ENCODE measurements at regions of chr3 and their contacts with region 1.

Region 1: DNA sequence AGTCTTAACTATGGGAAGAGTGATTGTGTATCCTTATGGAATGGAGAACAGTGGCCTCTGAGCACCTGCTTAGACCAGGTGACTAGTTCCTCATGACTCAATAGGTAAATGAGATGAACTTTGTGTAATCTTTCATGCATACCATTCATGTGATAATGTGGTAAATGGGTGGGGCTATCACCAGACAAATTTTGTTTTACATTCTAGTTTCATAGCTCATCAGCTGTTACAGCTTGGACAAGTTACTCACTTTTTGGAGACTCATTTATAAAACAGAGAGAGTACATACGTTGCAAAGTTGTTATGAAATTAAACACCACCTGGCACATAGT is 103.7 kb upstream of the TGFBR2 start:
- DNase-seq: no peak
- H3K4me3 Mint-ChIP-seq: no peak overlapping the region
- H3K27ac Mint-ChIP-seq: peak overlapping the region; percentile 70
- H3K4me1 Mint-ChIP-seq: peaks cover 46% of the 10 kb centered on the region
- H3K27me3 Mint-ChIP-seq: no peaks in the 10 kb centered on the region

Region 2: DNA sequence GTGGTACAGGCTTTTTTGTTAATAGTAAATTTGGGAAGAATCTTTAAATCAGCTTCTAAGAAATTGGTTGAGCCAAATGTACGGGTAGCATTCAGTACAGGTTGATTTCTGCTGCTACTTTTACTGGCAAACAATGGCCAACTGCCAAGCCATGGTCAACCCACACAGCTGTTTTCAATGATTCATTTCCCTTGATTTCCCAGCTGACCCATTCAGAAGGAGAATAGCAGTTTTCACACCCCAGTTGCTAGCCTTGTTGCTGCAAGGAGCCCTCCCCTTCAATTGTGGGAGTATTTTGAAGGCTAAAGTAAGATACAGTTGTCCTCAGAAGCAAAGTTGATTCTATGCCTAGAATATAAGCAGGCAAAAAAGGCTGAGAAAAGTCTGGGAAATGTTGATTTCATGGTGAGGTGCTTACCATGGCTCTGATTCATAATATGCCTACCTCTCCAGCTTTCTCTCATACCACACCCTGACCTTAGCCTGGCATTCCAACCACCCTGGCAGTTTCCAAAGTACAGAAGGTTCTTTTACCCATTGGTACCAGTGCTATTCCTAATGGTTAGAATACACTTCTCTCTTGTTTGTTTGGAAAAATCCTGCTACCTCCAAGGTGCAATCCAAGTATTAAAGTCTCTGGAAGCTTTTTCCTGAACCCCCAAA is 216.6 kb before region 1 on chr3:
- CTCF ChIA-PET with region 1: no interaction called
- POLR2A ChIA-PET with region 1: no interaction called
- intact Hi-C with region 1: loop called (anchors 5 kb)
- DNase-seq: peak; percentile 66
- H3K4me3 Mint-ChIP-seq: no peak overlapping the region
- H3K27ac Mint-ChIP-seq: no peak overlapping the region
- H3K4me1 Mint-ChIP-seq: peaks cover 32% of the 10 kb centered on the region
- H3K27me3 Mint-ChIP-seq: no peaks in the 10 kb centered on the region

Region 3: GRCh38 chr3:30475038-30475808 is 27.5 kb before region 1 on chr3:
- CTCF ChIA-PET with region 1: no interaction called
- POLR2A ChIA-PET with region 1: interaction called, 3 read pairs
- intact Hi-C with region 1: loop called (anchors 2 kb)
- DNase-seq: peak; percentile 14
- H3K4me3 Mint-ChIP-seq: no peak overlapping the region
- H3K27ac Mint-ChIP-seq: no peak overlapping the region
- H3K4me1 Mint-ChIP-seq: peaks cover 29% of the 10 kb centered on the region
- H3K27me3 Mint-ChIP-seq: no peaks in the 10 kb centered on the region

Region 4: DNA sequence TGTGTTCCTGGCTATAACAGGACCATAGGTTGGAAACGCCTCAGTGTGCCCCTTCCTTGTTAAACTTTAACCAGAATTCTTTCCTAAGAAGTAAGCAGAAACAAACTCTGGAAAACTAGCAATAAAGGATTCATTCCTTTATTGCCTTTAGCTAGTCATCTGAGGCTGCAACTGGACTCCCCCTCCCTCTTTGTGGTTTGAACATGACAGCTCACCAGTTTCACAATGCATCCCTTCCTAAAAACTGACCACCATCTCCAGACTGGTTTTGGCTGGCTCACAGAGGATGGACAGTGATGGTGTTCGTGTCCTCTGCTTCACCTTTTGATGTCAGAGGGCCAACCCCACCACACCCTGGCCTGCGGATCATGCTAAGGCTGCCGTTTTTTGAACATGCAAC is 75.8 kb after region 1 on chr3:
- CTCF ChIA-PET with region 1: no interaction called
- POLR2A ChIA-PET with region 1: no interaction called
- intact Hi-C with region 1: no loop called
- DNase-seq: no peak
- H3K4me3 Mint-ChIP-seq: no peak overlapping the region
- H3K27ac Mint-ChIP-seq: no peak overlapping the region
- H3K4me1 Mint-ChIP-seq: peaks cover 9% of the 10 kb centered on the region
- H3K27me3 Mint-ChIP-seq: no peaks in the 10 kb centered on the region

Region 5: GRCh38 chr3:30628901-30629590 is 126.3 kb after region 1 on chr3:
- CTCF ChIA-PET with region 1: no interaction called
- POLR2A ChIA-PET with region 1: no interaction called
- intact Hi-C with region 1: loop called (anchors 1 kb)
- DNase-seq: no peak
- H3K4me3 Mint-ChIP-seq: peak overlapping the region; percentile 45
- H3K27ac Mint-ChIP-seq: peak overlapping the region; percentile 91
- H3K4me1 Mint-ChIP-seq: peaks cover 90% of the 10 kb centered on the region
- H3K27me3 Mint-ChIP-seq: no peaks in the 10 kb centered on the region

Region 6: DNA sequence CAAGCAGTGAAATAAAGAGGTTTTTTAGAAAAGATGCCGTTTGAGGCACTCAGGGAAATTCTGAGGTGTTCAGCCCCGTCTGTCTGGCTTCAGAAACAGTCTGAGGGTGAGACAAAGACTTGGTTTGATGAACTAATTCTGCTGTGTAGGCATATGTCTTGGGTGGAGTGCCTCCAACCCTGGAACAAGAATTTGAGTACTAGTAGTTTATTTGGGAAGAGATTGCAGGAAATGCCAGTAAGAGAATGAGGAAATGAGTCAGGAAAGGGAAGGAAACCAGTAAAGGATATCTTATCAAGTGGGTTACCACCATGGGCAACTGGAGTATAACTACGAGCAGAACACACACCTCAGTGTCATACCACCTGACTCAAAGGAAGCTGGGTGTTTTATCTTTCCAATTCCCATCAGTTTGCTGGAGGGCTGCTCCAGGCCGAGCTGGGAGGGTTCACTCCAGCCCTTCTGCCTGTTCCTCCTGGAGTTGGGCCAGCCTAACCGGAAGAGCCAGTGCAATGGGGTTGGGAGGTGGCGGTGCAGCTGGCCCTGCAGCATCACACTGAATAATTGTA is 179.0 kb after region 1 on chr3:
- CTCF ChIA-PET with region 1: no interaction called
- POLR2A ChIA-PET with region 1: no interaction called
- intact Hi-C with region 1: loop called (anchors 2 kb)
- DNase-seq: no peak
- H3K4me3 Mint-ChIP-seq: no peak overlapping the region
- H3K27ac Mint-ChIP-seq: peak overlapping the region; percentile 65
- H3K4me1 Mint-ChIP-seq: peaks cover 86% of the 10 kb centered on the region
- H3K27me3 Mint-ChIP-seq: no peaks in the 10 kb centered on the region